Caco-2 (cell line): ENCODE measurements at regions of chr22 and their contacts with region 1.

Region 1: GRCh38 chr22:43993027-43993760 is 30.9 kb upstream of the PARVB start:
- DNase-seq: peak; percentile 48 to 64
- H3K4me3 ChIP-seq: no peak overlapping the region
- H3K4me3 Mint-ChIP-seq: no peak overlapping the region
- H3K27ac Mint-ChIP-seq: no peak overlapping the region
- H3K4me1 ChIP-seq: no peaks in the 10 kb centered on the region
- H3K4me1 Mint-ChIP-seq: peaks cover 7% of the 10 kb centered on the region
- H3K27me3 ChIP-seq: no peaks in the 10 kb centered on the region
- H3K27me3 Mint-ChIP-seq: no peaks in the 10 kb centered on the region
- CTCF ChIP-seq: peak; percentile 91 to 96

Region 2: DNA sequence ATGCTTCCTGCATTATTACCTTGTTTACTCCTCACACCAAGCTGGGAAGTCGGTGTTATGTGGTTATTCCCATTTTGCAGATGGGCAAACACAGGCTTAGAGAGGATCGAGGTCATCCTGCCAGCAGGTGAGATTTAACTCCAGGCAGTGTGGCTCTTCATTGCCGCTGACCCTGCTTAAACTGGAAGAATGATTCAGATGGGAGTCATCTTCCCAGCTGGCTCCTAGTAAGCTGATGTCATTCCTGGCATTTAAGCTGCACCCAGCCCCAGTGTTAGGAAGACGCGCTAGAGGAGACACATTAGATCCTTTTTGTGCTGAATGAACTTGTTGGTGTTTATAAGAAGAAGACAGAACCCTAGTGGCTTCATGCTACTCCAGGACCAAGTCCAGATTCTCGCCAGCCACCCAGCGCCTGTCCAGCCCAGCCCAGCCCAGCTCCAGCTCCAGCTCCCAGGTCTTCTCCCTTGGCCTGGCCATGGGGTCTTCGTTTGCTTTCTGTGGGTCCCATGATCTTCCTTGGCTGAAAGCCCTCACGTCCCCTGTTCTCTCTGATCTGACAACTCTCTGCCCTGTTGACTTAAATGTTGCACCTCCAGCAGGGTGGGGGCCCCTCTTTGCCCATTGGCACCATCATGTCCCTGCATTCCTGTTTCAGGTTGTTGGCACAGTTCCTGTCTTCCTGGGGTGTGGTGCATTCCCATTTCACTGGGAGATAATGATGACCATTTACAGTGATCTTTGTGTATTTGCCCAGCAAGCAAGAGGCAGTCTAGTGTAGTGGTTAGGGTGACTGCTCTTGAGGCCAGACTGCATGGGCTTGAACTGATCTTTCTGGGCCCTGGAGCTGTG is 44.6 kb after region 1 on chr22:
- CTCF ChIA-PET with region 1: interaction called, 11 read pairs
- POLR2A ChIA-PET with region 1: no interaction called
- intact Hi-C with region 1: no loop called
- DNase-seq: no peak
- H3K4me3 ChIP-seq: no peak overlapping the region
- H3K4me3 Mint-ChIP-seq: no peak overlapping the region
- H3K27ac Mint-ChIP-seq: no peak overlapping the region
- H3K4me1 ChIP-seq: no peaks in the 10 kb centered on the region
- H3K4me1 Mint-ChIP-seq: no peaks in the 10 kb centered on the region
- H3K27me3 ChIP-seq: no peaks in the 10 kb centered on the region
- H3K27me3 Mint-ChIP-seq: no peaks in the 10 kb centered on the region
- CTCF ChIP-seq: no peak

Region 3: GRCh38 chr22:44080936-44081861 is 88.0 kb after region 1 on chr22:
- CTCF ChIA-PET with region 1: interaction called, 90 read pairs
- POLR2A ChIA-PET with region 1: no interaction called
- intact Hi-C with region 1: loop called (anchors 1 kb)
- DNase-seq: peak; percentile 61 to 62
- H3K4me3 ChIP-seq: no peak overlapping the region
- H3K4me3 Mint-ChIP-seq: no peak overlapping the region
- H3K27ac Mint-ChIP-seq: no peak overlapping the region
- H3K4me1 ChIP-seq: no peaks in the 10 kb centered on the region
- H3K4me1 Mint-ChIP-seq: no peaks in the 10 kb centered on the region
- H3K27me3 ChIP-seq: no peaks in the 10 kb centered on the region
- H3K27me3 Mint-ChIP-seq: no peaks in the 10 kb centered on the region
- CTCF ChIP-seq: peak; percentile 79 to 90

Region 4: GRCh38 chr22:44625981-44626687 is 632.9 kb after region 1 on chr22:
- CTCF ChIA-PET with region 1: interaction called, 13 read pairs
- POLR2A ChIA-PET with region 1: no interaction called
- intact Hi-C with region 1: loop called (anchors 1 kb)
- DNase-seq: peak; percentile 67 to 81
- H3K4me3 ChIP-seq: no peak overlapping the region
- H3K4me3 Mint-ChIP-seq: no peak overlapping the region
- H3K27ac Mint-ChIP-seq: no peak overlapping the region
- H3K4me1 ChIP-seq: peaks cover 3% of the 10 kb centered on the region; the same call in 1 of the 2 replicates
- H3K4me1 Mint-ChIP-seq: peaks cover 7% of the 10 kb centered on the region
- H3K27me3 ChIP-seq: no peaks in the 10 kb centered on the region
- H3K27me3 Mint-ChIP-seq: peaks cover 19% of the 10 kb centered on the region
- CTCF ChIP-seq: peak; percentile 94 to 97